GM12878 (cell line): ENCODE measurements at regions of chr7 and their contacts with region 1.

Region 1: DNA sequence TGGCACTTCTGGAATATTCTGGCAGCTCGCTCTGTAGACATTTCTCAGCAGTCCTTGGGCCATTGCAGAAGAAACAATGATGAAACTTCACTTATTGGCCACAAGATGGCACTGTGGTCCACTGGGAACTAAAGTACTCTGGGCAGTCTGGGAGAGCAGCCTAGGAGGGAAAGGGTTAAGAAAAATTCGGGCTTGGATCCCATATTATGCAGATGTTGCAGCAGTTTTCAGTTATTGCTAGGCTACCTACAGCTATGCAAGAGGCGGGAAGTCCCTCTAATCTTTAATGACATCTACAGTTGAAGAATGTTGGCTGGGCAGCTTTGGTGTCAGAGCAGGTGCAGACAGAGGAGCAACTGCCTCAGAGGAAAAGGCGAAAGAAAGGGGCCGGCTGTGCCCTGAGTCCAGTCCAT is 201.7 kb upstream of the PRSS58 start:
- DNase-seq: no peak
- ATAC-seq: peak; percentile 95
- H3K4me3 ChIP-seq: no peak overlapping the region
- H3K27ac ChIP-seq: no peak overlapping the region
- H3K4me1 ChIP-seq: no peaks in the 10 kb centered on the region
- H3K27me3 ChIP-seq: peaks cover 0 to 2% of the 10 kb centered on the region in 2 experiments; a peak in 1 of 4 replicates
- CTCF ChIP-seq: peak; percentile 61 to 73 (median 64)
- EP300 ChIP-seq: no peak
- POLR2A ChIP-seq: no peak
- RAD21 ChIP-seq: peak; percentile 62

Region 2: DNA sequence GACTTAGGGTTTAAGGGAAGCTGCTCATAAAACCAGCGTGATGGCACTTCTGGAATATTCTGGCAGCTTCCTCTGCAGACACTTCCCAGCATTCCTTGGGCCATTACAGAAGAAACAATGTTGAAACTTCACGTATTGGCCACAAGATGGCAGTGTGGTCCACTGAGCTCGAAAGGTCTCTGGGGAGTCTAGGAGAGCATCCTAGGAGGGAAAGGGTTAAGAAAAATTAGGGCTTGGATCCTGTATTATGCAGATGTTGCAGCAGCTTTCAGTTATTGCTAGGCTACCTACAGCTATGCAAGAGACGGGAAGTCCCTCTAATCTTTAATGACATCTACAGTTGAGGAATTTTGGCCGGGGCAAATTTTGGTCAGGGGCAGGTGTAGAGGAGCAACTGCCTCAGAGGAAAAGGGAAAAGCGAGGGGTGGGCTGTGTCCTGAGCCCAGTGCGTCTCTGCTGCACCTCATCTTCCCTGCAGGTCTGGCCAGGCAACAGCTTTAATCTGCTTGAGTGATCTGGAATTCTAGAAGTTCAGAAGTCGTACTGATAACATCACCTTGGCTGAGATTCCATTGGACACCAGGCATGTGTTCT is 19.0 kb after region 1 on chr7:
- CTCF ChIA-PET with region 1: interaction called, 205 read pairs
- POLR2A ChIA-PET with region 1: no interaction called
- RAD21 ChIA-PET with region 1: interaction called, 3 read pairs
- SMC1A ChIA-PET with region 1: interaction called, 5 read pairs
- in situ Hi-C with region 1: no loop called
- intact Hi-C with region 1: loop called (anchors 1 kb)
- DNase-seq: no peak
- ATAC-seq: peak; percentile 87
- H3K4me3 ChIP-seq: no peak overlapping the region
- H3K27ac ChIP-seq: no peak overlapping the region
- H3K4me1 ChIP-seq: no peaks in the 10 kb centered on the region; the same call in 1 of the 2 replicates
- H3K27me3 ChIP-seq: no peaks in the 10 kb centered on the region
- CTCF ChIP-seq: peak; percentile 46 to 59 (median 57)
- EP300 ChIP-seq: no peak; a peak in 1 of 4 replicates
- POLR2A ChIP-seq: no peak
- RAD21 ChIP-seq: peak; percentile 24; the same call in 1 of the 2 replicates